CD14-positive monocyte (primary cell): ENCODE measurements at regions of chr15 and their contacts with region 1.

Region 1: GRCh38 chr15:26294059-26294689 is 431.0 kb upstream of the ATP10A start:
- DNase-seq: no peak
- H3K4me3 ChIP-seq: no peak overlapping the region
- H3K4me3 Mint-ChIP-seq: no peak overlapping the region
- H3K27ac ChIP-seq: no peak overlapping the region
- H3K27ac Mint-ChIP-seq: no peak overlapping the region
- H3K4me1 ChIP-seq: no peaks in the 10 kb centered on the region
- H3K4me1 Mint-ChIP-seq: no peaks in the 10 kb centered on the region
- H3K27me3 ChIP-seq: no peaks in the 10 kb centered on the region
- H3K27me3 Mint-ChIP-seq: peaks cover 0 to 2% (median 0%) of the 10 kb centered on the region in 3 donors
- CTCF ChIP-seq: no peak

Region 2: GRCh38 chr15:26224266-26224665 is 69.9 kb before region 1 on chr15:
- intact Hi-C with region 1: no loop called
- DNase-seq: no peak
- H3K4me3 ChIP-seq: no peak overlapping the region
- H3K4me3 Mint-ChIP-seq: no peak overlapping the region
- H3K27ac ChIP-seq: no peak overlapping the region
- H3K27ac Mint-ChIP-seq: no peak overlapping the region
- H3K4me1 ChIP-seq: no peaks in the 10 kb centered on the region
- H3K4me1 Mint-ChIP-seq: no peaks in the 10 kb centered on the region
- H3K27me3 ChIP-seq: no peaks in the 10 kb centered on the region
- H3K27me3 Mint-ChIP-seq: no peaks in the 10 kb centered on the region
- CTCF ChIP-seq: no peak

Region 3: GRCh38 chr15:26234976-26235767 is 59.0 kb before region 1 on chr15:
- intact Hi-C with region 1: loop called in 1 of 2 experiments (anchors 10 kb)
- DNase-seq: no peak
- H3K4me3 ChIP-seq: no peak overlapping the region
- H3K4me3 Mint-ChIP-seq: no peak overlapping the region
- H3K27ac ChIP-seq: no peak overlapping the region
- H3K27ac Mint-ChIP-seq: no peak overlapping the region
- H3K4me1 ChIP-seq: no peaks in the 10 kb centered on the region
- H3K4me1 Mint-ChIP-seq: no peaks in the 10 kb centered on the region
- H3K27me3 ChIP-seq: no peaks in the 10 kb centered on the region
- H3K27me3 Mint-ChIP-seq: peaks cover 0 to 4% (median 2%) of the 10 kb centered on the region in 3 donors
- CTCF ChIP-seq: no peak

Region 4: DNA sequence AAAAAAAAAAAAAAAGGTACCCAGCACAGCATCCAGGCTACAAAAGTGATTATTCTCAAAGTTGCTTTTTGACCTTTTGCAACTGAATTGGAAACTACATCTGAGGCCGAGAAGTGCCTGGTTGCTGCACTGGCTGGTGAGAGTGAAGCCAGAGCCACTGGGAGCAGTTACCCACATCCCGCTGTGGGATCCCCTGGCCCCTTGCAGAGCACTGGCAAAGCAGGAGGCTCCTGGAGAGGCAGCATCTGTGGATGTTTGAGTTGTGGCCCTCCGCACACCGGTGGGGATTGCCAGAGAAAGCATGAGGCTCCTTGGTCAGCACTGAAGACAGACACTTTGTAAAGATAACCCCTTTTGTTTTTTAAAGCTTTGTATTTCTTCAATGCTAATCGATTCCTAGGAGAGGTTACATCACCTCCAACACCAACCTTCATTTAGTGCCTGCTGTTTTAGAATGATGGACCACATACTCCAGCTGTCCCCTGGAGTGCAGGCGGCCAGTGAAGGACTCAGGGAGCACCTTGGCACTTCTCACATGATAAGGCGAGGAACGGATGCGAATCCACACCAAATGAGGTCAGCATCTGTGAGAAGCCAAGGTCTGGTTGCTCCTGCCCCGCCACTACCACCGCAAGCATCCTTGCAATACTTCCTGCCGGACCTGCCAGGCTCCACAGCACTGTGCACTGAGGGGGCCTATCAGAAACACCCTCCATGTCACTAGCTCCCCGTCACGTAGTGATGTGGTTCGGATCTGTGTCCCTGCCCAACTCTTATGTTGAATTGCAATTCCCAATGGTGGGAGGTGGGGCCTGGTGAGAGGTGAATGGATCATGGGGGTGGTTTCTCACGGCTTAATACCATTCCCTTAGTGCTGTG is 222.2 kb after region 1 on chr15:
- intact Hi-C with region 1: no loop called
- DNase-seq: no peak
- H3K4me3 ChIP-seq: no peak overlapping the region
- H3K4me3 Mint-ChIP-seq: no peak overlapping the region
- H3K27ac ChIP-seq: no peak overlapping the region
- H3K27ac Mint-ChIP-seq: no peak overlapping the region
- H3K4me1 ChIP-seq: no peaks in the 10 kb centered on the region
- H3K4me1 Mint-ChIP-seq: no peaks in the 10 kb centered on the region
- H3K27me3 ChIP-seq: no peaks in the 10 kb centered on the region
- H3K27me3 Mint-ChIP-seq: no peaks in the 10 kb centered on the region
- CTCF ChIP-seq: no peak